Caco-2 (cell line): ENCODE measurements at regions of chr12 and their contacts with region 1.

Region 1: GRCh38 chr12:43676183-43676813 is 82.3 kb downstream of the PUS7L start:
- DNase-seq: peak; percentile 53 to 54
- H3K4me3 ChIP-seq: no peak overlapping the region
- H3K4me3 Mint-ChIP-seq: no peak overlapping the region
- H3K27ac Mint-ChIP-seq: peak overlapping the region; percentile 82
- H3K4me1 ChIP-seq: peaks cover 20% of the 10 kb centered on the region
- H3K4me1 Mint-ChIP-seq: peaks cover 17% of the 10 kb centered on the region
- H3K27me3 ChIP-seq: no peaks in the 10 kb centered on the region
- H3K27me3 Mint-ChIP-seq: peaks cover 4% of the 10 kb centered on the region
- CTCF ChIP-seq: peak; percentile 49 to 60

Region 2: GRCh38 chr12:43444940-43445564 is 231.2 kb before region 1 on chr12:
- CTCF ChIA-PET with region 1: no interaction called
- POLR2A ChIA-PET with region 1: no interaction called
- intact Hi-C with region 1: loop called (anchors 5 kb)
- DNase-seq: peak; percentile 58 to 75
- H3K4me3 ChIP-seq: no peak overlapping the region
- H3K4me3 Mint-ChIP-seq: no peak overlapping the region
- H3K27ac Mint-ChIP-seq: no peak overlapping the region
- H3K4me1 ChIP-seq: no peaks in the 10 kb centered on the region
- H3K4me1 Mint-ChIP-seq: no peaks in the 10 kb centered on the region
- H3K27me3 ChIP-seq: no peaks in the 10 kb centered on the region
- H3K27me3 Mint-ChIP-seq: peaks cover 4% of the 10 kb centered on the region
- CTCF ChIP-seq: peak; percentile 85 to 88

Region 3: GRCh38 chr12:43501703-43502102 is 174.6 kb before region 1 on chr12:
- CTCF ChIA-PET with region 1: no interaction called
- POLR2A ChIA-PET with region 1: no interaction called
- intact Hi-C with region 1: loop called (anchors 1 kb)
- DNase-seq: peak in 1 of 2 experiments; percentile 12
- H3K4me3 ChIP-seq: no peak overlapping the region
- H3K4me3 Mint-ChIP-seq: no peak overlapping the region
- H3K27ac Mint-ChIP-seq: no peak overlapping the region
- H3K4me1 ChIP-seq: no peaks in the 10 kb centered on the region
- H3K4me1 Mint-ChIP-seq: no peaks in the 10 kb centered on the region
- H3K27me3 ChIP-seq: no peaks in the 10 kb centered on the region
- H3K27me3 Mint-ChIP-seq: peaks cover 2% of the 10 kb centered on the region
- CTCF ChIP-seq: peak; percentile 42 to 60

Region 4: DNA sequence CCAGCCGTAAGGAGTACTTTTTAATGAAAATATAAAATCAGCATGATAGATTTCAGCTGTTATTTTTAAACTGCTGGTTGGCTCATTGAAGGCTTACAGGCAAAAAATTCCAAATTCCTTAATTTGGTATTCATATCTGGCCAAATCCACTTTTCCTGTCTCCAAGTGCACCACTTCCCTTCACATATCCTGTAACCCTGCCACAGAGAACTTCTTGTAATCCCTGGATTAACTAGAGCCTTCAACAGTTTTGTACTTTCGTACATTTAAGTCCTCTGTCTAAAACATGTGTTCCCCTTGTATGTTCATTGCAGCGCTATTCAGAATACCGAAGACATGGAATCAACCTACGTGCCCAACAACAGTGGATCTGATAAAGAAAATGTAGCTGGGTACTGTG is 72.7 kb after region 1 on chr12:
- CTCF ChIA-PET with region 1: no interaction called
- POLR2A ChIA-PET with region 1: no interaction called
- intact Hi-C with region 1: no loop called
- DNase-seq: no peak
- H3K4me3 ChIP-seq: no peak overlapping the region
- H3K4me3 Mint-ChIP-seq: no peak overlapping the region
- H3K27ac Mint-ChIP-seq: no peak overlapping the region
- H3K4me1 ChIP-seq: no peaks in the 10 kb centered on the region
- H3K4me1 Mint-ChIP-seq: peaks cover 8% of the 10 kb centered on the region
- H3K27me3 ChIP-seq: no peaks in the 10 kb centered on the region
- H3K27me3 Mint-ChIP-seq: no peaks in the 10 kb centered on the region
- CTCF ChIP-seq: no peak